Left ventricle myocardium superior (tissue), 1 donor: ENCODE measurements at regions of chr12 and their contacts with region 1.

Region 1: DNA sequence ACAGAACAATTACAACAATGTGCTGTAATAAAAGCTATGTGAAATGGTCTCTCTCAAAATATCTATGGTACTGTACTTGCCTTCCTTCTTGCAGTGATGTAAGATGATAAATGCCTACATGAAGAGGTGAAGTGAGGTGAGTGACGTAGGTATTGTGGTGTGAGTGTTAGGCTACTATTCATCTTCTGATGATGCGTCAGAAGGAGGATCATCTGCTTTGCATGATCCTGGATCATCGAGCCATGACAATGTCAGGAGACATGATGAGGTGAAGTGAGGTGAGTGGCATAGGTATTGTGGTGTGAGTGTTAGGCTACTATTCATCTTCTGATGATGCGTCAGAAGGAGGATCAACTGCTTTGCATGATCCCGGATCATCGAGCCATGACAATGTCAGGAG is 105.8 kb downstream of the KCNC2 start:
- DNase-seq: no peak
- ATAC-seq: no peak

Region 2: DNA sequence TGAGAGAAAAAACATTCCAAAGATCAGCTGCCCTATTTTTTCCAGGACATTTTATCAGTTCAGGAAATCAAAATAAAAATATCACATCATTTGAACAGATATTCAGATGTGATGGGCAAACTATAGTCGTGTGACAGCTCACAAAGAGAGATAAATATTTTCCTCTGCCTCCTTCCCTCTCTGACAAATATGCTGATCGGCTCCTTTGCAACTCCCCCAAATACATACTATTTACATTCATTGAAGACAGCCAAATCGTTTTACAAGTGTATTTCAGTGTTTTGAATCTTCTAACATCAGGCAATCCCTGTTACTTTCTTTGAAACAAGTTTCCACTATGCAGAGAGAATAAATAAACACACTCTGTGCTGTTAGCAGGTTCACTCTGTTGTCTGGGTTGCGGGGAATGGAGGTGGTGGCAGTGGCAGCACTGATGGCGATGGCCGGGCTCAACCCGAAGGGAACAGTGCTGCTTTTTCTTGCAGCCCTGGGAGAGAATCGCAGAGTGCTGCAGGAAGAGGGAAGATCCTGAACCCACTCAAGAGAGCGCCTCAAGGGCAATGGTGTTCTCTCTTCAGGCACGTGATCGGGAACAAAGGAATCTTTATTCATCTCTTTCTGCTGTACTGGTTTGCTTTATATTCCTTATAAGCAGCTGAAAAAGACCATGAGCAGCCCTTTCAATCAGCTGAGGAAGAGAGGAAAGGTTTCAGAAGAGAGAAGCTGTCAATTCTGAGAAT is 785.2 kb after region 1 on chr12:
- intact Hi-C with region 1: loop called (anchors 10 kb)
- DNase-seq: no peak
- ATAC-seq: no peak